OCI-LY7 (cell line): ENCODE measurements at regions of chr11 and their contacts with region 1.

Region 1: GRCh38 chr11:108697872-108698473 is 33.1 kb downstream of the DDX10 start:
- DNase-seq: peak; percentile 72
- H3K4me3 ChIP-seq: no peak overlapping the region
- H3K27ac ChIP-seq: no peak overlapping the region
- H3K4me1 ChIP-seq: no peaks in the 10 kb centered on the region
- CTCF ChIP-seq: peak; percentile 91

Region 2: DNA sequence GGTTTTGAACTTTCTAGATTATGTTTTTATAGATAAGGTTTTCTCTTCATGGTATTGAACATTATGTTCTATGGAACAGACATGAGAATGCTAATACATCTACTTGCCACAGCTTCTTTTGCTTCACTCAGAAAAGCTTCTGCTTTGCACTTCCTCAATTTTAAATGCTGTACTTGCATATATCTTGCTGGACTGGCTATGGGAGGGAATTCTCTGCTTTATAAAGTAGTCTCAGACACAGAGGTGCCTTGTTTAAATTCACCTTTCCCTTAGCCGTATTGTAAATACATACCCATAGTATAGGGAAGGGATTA is 140.8 kb after region 1 on chr11:
- CTCF ChIA-PET with region 1: no interaction called
- POLR2A ChIA-PET with region 1: no interaction called
- intact Hi-C with region 1: no loop called
- DNase-seq: no peak
- H3K4me3 ChIP-seq: no peak overlapping the region
- H3K27ac ChIP-seq: no peak overlapping the region
- H3K4me1 ChIP-seq: no peaks in the 10 kb centered on the region
- CTCF ChIP-seq: no peak

Region 3: GRCh38 chr11:108871152-108871551 is 173.2 kb after region 1 on chr11:
- CTCF ChIA-PET with region 1: no interaction called
- POLR2A ChIA-PET with region 1: no interaction called
- intact Hi-C with region 1: loop called (anchors 5 kb)
- DNase-seq: peak; percentile 30
- H3K4me3 ChIP-seq: no peak overlapping the region
- H3K27ac ChIP-seq: no peak overlapping the region
- H3K4me1 ChIP-seq: no peaks in the 10 kb centered on the region
- CTCF ChIP-seq: peak; percentile 66

Region 4: DNA sequence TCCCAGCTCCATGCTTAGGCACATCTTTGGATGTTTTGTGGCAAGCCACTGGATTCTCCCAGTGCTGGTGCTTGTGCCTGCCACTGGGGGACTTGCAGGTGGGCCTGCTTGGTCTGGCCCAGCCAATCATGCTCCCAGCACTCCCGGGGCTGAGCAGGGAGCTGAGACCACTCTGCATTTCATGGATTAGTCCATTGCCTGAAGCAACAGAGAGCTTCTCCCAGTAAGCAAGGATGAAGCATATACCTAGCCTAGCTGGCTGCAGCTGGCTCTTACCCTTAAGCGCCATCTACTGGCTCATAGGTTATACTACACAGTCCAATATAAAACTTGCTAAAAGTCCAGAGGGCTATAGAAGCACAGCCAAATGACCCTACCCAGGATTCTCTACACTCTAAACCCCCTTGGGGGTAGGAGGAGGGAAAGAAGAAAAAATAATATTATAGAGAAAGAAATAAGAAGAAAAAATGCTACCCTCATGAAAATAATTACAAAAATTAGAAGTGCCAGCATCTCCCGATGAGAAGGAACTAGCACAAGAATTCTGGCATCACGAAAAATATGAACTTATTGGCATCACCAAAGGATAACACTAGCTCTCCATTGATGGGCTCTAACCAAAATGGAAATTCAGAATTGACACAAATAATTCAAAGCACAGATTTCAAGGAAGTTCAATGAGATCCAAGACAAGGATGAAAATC is 999.3 kb after region 1 on chr11:
- CTCF ChIA-PET with region 1: no interaction called
- POLR2A ChIA-PET with region 1: no interaction called
- intact Hi-C with region 1: loop called (anchors 5 kb)
- DNase-seq: peak; percentile 47
- H3K4me3 ChIP-seq: no peak overlapping the region
- H3K27ac ChIP-seq: no peak overlapping the region
- H3K4me1 ChIP-seq: no peaks in the 10 kb centered on the region
- CTCF ChIP-seq: peak; percentile 88